Heart left ventricle (tissue), 16 donors: ENCODE measurements at regions of chr1 and their contacts with region 1.

Region 1: GRCh38 chr1:29235955-29236684 is at the start of gene PTPRU:
- DNase-seq: peak; percentile 78 to 92 (median 84)
- ATAC-seq: peak; percentile 54 to 89 (median 80)
- H3K4me3 ChIP-seq: peak within 1 kb of the TSS; percentile 48 to 83 (median 68)
- H3K27ac ChIP-seq: peak within 1 kb of the TSS in 11 of 12 donors; percentile 15 to 72 (median 46)
- H3K4me1 ChIP-seq: peaks cover 0 to 31% (median 15%) of the 10 kb centered on the region in 12 donors
- H3K27me3 ChIP-seq: peaks cover 0 to 30% (median 0%) of the 10 kb centered on the region in 9 donors
- CTCF ChIP-seq: peak; percentile 42 to 96 (median 85)
- POLR2A ChIP-seq: peak in 1 of 2 donors; percentile 22
- total RNA-seq, gene PTPRU: 7.1 to 59.9 (median 16.2) TPM

Region 2: DNA sequence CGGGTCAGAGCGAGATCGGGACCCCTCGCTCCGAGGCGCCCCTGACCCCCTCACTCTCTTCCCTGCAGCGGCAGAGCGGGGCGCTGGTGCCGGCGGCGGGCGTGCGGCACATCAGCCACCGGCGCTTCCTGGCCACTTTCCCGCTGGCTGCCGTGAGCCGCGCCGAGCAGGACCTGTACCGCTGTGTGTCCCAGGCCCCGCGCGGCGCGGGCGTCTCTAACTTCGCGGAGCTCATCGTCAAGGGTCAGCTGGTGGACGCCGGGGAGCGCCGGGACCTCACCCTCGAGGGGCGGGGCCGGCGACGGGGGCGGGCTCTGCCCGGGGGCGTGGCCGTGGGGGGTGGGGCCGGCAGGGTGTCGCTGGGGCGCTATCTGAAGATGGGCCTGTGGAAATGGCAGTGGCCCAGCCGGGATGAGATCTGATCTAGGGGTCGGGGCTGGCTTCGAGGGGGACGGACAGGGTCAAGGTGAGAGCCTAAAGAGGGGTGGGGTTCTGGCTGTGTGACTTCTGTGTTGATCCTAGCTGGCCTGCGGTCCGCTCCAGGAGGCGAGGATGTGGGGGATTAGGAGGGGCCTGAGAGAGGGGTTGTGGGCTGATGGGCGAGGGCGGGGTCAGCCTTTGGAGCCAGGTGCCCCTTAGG is 23.8 kb after region 1 on chr1:
- intact Hi-C with region 1: no loop called
- DNase-seq: peak; percentile 45 to 79 (median 52)
- ATAC-seq: peak; percentile 29 to 90 (median 79)
- H3K4me3 ChIP-seq: peak overlapping the region; percentile 29 to 67 (median 56)
- H3K27ac ChIP-seq: peak overlapping the region in 1 of 12 donors; percentile 47
- H3K4me1 ChIP-seq: peaks cover 0 to 17% (median 9%) of the 10 kb centered on the region in 12 donors
- H3K27me3 ChIP-seq: peaks cover 0 to 32% (median 0%) of the 10 kb centered on the region in 9 donors
- CTCF ChIP-seq: no peak
- POLR2A ChIP-seq: no peak

Region 3: DNA sequence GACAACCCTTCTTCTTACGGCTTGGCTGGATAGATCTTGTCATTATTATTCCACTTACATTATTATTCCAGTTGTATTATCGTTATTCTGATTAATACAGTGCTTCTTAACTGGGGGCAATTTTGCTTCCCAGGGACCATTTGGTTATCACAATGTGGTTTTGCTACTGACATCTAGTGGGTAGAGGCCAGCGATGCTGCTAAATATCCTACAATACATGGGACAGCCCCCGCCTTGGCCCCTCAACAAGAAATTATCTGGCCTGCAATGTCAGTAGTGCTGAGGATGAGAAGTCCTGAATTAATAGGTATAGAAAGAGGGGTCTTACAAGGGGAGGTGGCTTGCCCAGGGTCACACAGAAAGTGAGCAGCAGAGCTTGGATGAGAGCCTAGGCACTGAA is 105.8 kb after region 1 on chr1:
- intact Hi-C with region 1: loop called in 4 of 10 experiments (anchors 5 to 10 kb)
- DNase-seq: no peak
- ATAC-seq: no peak
- H3K4me3 ChIP-seq: no peak overlapping the region
- H3K27ac ChIP-seq: no peak overlapping the region
- H3K4me1 ChIP-seq: no peaks in the 10 kb centered on the region
- H3K27me3 ChIP-seq: peaks cover 0 to 63% (median 14%) of the 10 kb centered on the region in 9 donors
- CTCF ChIP-seq: peak in 3 of 12 donors; percentile 14 to 24 (median 22)
- POLR2A ChIP-seq: no peak

Region 4: DNA sequence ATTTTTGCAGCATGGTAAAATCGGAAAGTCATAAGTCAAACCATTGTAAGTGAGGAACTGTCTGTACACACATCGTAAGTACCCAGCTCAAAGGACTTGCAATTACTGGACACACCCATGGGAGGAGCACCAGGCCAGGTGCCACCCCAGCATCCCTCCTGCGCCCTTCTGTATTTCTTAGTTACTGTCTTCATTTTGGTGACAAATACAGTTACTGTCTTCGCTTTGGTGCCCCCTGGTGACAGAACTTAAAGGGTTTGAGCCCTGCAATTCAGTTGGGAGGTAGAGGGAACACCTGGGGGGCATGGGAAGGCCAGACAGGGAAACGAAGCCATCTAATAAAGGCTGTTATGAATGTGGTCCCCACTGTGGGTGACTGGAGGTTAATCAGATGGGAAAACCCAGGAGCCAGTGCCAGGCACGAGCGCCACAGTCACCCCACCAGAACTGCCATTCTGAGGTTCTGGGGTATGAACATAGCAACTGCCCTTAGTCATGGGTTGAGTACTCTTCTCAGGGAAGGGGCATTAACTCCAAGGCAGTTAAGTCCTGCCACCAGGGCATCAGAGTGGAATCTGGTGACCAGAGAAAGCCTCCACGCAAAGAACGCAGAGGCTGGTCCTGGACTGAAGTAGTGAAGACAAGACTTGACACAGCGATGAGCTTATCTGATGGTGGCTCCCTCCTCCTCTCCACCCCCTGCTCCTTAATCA is 613.1 kb after region 1 on chr1:
- intact Hi-C with region 1: loop called in 2 of 10 experiments (anchors 5 to 10 kb)
- DNase-seq: no peak
- ATAC-seq: no peak
- H3K4me3 ChIP-seq: no peak overlapping the region
- H3K27ac ChIP-seq: no peak overlapping the region
- H3K4me1 ChIP-seq: peaks cover 0 to 7% (median 0%) of the 10 kb centered on the region in 12 donors
- H3K27me3 ChIP-seq: peaks cover 0 to 52% (median 8%) of the 10 kb centered on the region in 9 donors
- CTCF ChIP-seq: peak; percentile 13 to 52 (median 37)
- POLR2A ChIP-seq: no peak

Region 5: DNA sequence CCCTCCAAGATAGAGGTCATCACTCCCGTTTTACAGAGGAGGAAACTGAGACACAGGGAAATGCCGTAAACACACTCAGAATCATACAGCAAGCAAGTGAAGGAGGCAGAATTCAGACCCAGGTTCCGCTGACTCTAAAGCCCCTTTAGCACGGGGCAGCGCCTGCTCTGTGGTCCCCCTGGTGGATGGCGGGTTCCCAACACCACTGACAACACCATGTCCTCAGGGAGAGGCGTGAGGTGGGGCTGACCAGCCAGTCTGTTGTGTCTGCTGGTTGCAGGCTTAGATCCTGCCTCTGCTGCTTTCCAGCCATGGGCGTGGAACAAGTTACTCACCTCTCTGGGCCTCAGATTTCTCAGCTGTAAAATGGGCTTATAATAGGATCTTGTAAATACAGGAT is 870.0 kb after region 1 on chr1:
- intact Hi-C with region 1: loop called in 6 of 10 experiments (anchors 1 to 10 kb)
- DNase-seq: peak in 1 of 5 donors; percentile 28
- ATAC-seq: peak in 3 of 4 donors; percentile 35 to 70 (median 65)
- H3K4me3 ChIP-seq: no peak overlapping the region
- H3K27ac ChIP-seq: no peak overlapping the region
- H3K4me1 ChIP-seq: no peaks in the 10 kb centered on the region
- H3K27me3 ChIP-seq: peaks cover 0 to 67% (median 11%) of the 10 kb centered on the region in 9 donors
- CTCF ChIP-seq: peak; percentile 19 to 65 (median 35)
- POLR2A ChIP-seq: no peak

Region 6: GRCh38 chr1:30379684-30380624 is 1143.8 kb after region 1 on chr1:
- intact Hi-C with region 1: loop called (anchors 1 to 5 kb)
- DNase-seq: peak in 3 of 5 donors; percentile 43 to 47 (median 43)
- ATAC-seq: peak; percentile 32 to 82 (median 76)
- H3K4me3 ChIP-seq: no peak overlapping the region
- H3K27ac ChIP-seq: no peak overlapping the region
- H3K4me1 ChIP-seq: peaks cover 0 to 6% (median 0%) of the 10 kb centered on the region in 12 donors
- H3K27me3 ChIP-seq: peaks cover 0 to 30% (median 4%) of the 10 kb centered on the region in 9 donors
- CTCF ChIP-seq: peak; percentile 72 to 94 (median 86)
- POLR2A ChIP-seq: no peak